MCF 10A (cell line): ENCODE measurements at regions of chr2 and their contacts with region 1.

Region 1: DNA sequence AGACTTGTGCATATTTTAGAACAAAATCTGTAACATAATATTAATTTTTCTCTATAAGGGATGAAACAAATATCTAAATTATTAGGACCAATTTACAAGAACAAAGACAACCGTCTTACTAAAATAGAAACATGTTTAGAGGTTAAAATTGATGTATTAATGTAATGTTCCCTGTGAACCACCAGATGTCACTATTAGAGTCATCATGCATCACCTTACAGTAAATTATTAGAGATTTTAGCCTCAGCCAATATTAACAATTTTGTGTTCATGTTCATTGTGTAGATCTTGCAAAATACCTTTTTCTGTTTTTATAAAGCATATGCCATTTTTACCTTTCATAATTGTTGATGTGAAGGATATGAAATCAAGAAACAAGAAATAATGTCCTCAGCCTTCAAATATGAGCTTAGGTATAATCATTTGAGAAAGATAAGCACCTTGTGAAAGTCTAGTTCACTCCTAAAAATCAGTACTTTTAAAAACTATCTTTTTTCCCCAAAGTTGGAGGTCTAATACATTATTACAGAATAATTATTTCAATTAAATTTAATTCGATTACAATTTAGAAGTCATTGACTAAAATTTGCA is 344.3 kb upstream of the KCNH7 start:
- DNase-seq: peak; percentile 36
- H3K4me3 Mint-ChIP-seq: no peak overlapping the region
- H3K27ac Mint-ChIP-seq: no peak overlapping the region
- H3K4me1 Mint-ChIP-seq: peaks cover under 1% of the 10 kb centered on the region
- H3K27me3 Mint-ChIP-seq: no peaks in the 10 kb centered on the region
- CTCF ChIP-seq: peak; percentile 51

Region 2: GRCh38 chr2:163155279-163155883 is 27.5 kb before region 1 on chr2:
- CTCF ChIA-PET with region 1: interaction called, 13 read pairs
- POLR2A ChIA-PET with region 1: no interaction called
- intact Hi-C with region 1: no loop called
- DNase-seq: peak; percentile 61
- H3K4me3 Mint-ChIP-seq: no peak overlapping the region
- H3K27ac Mint-ChIP-seq: no peak overlapping the region
- H3K4me1 Mint-ChIP-seq: peaks cover 16% of the 10 kb centered on the region
- H3K27me3 Mint-ChIP-seq: no peaks in the 10 kb centered on the region
- CTCF ChIP-seq: peak; percentile 81

Region 3: GRCh38 chr2:163198972-163199371 is 16.1 kb after region 1 on chr2:
- CTCF ChIA-PET with region 1: interaction called, 24 read pairs
- POLR2A ChIA-PET with region 1: no interaction called
- intact Hi-C with region 1: no loop called
- DNase-seq: no peak
- H3K4me3 Mint-ChIP-seq: no peak overlapping the region
- H3K27ac Mint-ChIP-seq: no peak overlapping the region
- H3K4me1 Mint-ChIP-seq: no peaks in the 10 kb centered on the region
- H3K27me3 Mint-ChIP-seq: no peaks in the 10 kb centered on the region
- CTCF ChIP-seq: no peak

Region 4: DNA sequence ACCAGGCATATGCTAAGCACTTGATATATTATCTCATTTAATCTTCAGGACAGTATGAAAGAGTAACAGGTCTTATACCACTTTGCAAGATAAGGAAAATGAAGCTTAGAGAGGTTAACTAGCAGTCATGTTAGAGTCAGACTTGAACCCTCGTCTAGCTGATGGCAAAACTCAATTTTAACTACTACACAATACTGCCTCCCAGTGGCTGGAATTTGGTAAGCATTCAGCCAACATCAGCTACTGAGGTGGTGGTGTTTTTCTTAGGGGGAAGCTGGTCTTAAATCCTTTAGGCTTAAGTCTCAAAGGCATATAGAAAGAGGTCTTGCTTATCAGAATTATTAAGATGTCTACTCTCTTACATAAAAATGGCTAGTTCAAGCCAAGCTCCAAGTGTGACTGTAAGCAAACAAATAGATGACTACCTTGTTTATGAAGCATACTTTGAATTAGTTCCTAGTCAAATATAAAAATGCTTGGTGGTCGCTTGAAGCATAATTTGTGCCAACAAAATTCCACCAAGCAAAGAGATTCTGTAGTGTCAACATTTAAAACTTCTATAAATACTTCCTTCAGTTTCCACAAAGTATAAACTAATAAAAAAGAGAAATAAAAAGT is 878.4 kb after region 1 on chr2:
- CTCF ChIA-PET with region 1: interaction called, 15 read pairs
- POLR2A ChIA-PET with region 1: no interaction called
- intact Hi-C with region 1: no loop called
- DNase-seq: peak; percentile 58
- H3K4me3 Mint-ChIP-seq: no peak overlapping the region
- H3K27ac Mint-ChIP-seq: no peak overlapping the region
- H3K4me1 Mint-ChIP-seq: no peaks in the 10 kb centered on the region
- H3K27me3 Mint-ChIP-seq: no peaks in the 10 kb centered on the region
- CTCF ChIP-seq: peak; percentile 80

Region 5: GRCh38 chr2:164495491-164496223 is 1312.8 kb after region 1 on chr2:
- CTCF ChIA-PET with region 1: interaction called, 3 read pairs
- POLR2A ChIA-PET with region 1: no interaction called
- intact Hi-C with region 1: loop called (anchors 5 kb)
- DNase-seq: peak; percentile 63
- H3K4me3 Mint-ChIP-seq: no peak overlapping the region
- H3K27ac Mint-ChIP-seq: no peak overlapping the region
- H3K4me1 Mint-ChIP-seq: no peaks in the 10 kb centered on the region
- H3K27me3 Mint-ChIP-seq: no peaks in the 10 kb centered on the region
- CTCF ChIP-seq: peak; percentile 68